ENCODE measurements at regions of chr1 and their contacts with region 1.

Region 1: DNA sequence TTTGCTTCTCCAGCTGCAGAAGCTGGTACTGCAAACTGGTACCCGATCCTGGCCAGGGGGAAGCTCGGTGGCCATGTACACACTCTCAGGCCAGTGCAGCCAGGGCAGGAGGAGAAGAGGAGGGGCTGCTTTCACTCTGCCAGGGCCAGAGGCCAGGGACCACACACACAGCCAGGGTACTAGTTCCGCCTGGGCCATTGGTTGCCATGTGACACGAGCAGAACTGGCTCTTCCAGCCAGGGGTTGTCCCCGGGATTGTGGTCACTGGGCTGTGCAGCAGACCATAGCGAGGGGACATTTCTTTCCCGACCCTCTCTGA is 3.7 kb upstream of the SHISAL2A start:
- DNase-seq: no peak

Region 2: GRCh38 chr1:52590275-52590674 is 39.0 kb before region 1 on chr1:
- intact Hi-C with region 1: no loop called
- DNase-seq: no peak

Region 3: GRCh38 chr1:52651904-52652303 is 22.6 kb after region 1 on chr1:
- intact Hi-C with region 1: loop called in 1 of 2 experiments (anchors 1 kb)
- DNase-seq: no peak